K562 (cell line): ENCODE measurements at regions of chr12 and their contacts with region 1.

Region 1: DNA sequence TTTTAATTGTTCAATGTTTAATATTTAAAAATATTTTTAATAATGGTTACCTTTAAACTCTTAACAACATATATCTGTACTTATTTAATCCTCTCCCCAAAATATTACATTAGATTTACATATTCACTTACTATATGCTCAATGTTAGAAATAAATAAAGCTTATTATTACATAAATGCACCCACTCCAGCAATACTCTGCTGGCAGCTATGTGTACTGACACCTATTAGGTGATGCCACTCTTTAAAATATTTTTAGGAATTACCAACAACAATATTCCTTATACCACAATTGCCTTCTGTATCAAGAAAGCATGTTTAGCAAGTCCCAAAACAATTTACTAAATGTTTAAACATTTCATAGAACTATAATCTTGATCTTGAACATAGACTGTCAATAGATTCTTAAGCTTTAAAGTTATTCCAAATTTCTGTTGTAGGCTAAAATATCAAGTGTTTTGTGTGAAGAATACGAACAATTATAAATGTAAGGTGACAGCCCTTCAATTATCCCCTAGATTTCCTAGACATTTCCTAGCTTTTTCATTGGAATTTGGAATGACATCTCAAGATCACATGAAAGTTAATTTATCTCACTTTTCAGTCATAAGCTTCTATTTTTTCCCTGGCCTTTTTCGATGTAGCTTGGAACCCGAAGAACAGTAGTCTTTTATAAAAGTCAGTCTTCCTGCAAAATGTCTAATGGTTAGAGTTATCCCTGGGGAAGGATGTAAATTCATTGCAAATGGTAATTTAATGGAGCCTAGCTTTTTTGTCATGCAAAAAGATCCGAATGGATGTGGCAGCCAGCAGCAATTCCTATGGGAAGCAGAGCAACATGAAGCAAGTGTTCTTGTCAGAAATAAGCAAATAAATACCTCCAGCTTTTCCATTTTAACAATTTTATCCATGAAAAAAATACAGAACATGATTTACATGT is 907.5 kb upstream of the ATXN7L3B start:
- DNase-seq: no peak
- ATAC-seq: no peak
- H3K4me3 ChIP-seq: no peak overlapping the region
- H3K27ac ChIP-seq: no peak overlapping the region
- H3K4me1 ChIP-seq: no peaks in the 10 kb centered on the region
- H3K27me3 ChIP-seq: no peaks in the 10 kb centered on the region
- CTCF ChIP-seq: no peak
- EP300 ChIP-seq: no peak
- POLR2A ChIP-seq: no peak
- RAD21 ChIP-seq: no peak

Region 2: DNA sequence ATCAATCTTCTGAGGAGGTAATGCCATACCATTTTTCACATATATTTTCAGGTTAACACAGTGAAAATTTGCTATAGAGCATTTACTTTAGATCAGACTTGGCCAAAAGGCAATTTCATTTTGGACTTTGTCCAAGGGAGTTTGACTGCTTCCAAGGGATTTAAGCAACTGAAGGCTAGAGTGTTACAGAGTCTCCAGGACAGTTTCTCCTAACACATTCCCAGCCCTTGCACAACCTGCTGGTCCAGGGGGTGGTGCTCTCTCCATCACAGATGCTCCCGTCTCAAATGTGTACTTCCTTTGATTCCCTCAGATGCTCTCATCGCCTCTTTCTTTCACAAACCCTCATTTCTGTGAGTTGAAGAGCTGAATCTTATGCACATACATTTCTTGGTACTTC is 1548.4 kb before region 1 on chr12:
- CTCF ChIA-PET with region 1: no interaction called
- POLR2A ChIA-PET with region 1: no interaction called
- in situ Hi-C with region 1: no loop called
- intact Hi-C with region 1: no loop called
- DNase-seq: no peak
- ATAC-seq: no peak
- H3K4me3 ChIP-seq: no peak overlapping the region
- H3K27ac ChIP-seq: no peak overlapping the region
- H3K4me1 ChIP-seq: no peaks in the 10 kb centered on the region
- H3K27me3 ChIP-seq: no peaks in the 10 kb centered on the region
- CTCF ChIP-seq: no peak
- EP300 ChIP-seq: no peak
- POLR2A ChIP-seq: no peak
- RAD21 ChIP-seq: no peak

Region 3: GRCh38 chr12:73067616-73068015 is 562.5 kb before region 1 on chr12:
- CTCF ChIA-PET with region 1: no interaction called
- POLR2A ChIA-PET with region 1: no interaction called
- in situ Hi-C with region 1: loop called (anchors 10 kb)
- intact Hi-C with region 1: no loop called
- DNase-seq: no peak
- ATAC-seq: no peak
- H3K4me3 ChIP-seq: no peak overlapping the region
- H3K27ac ChIP-seq: no peak overlapping the region
- H3K4me1 ChIP-seq: no peaks in the 10 kb centered on the region
- H3K27me3 ChIP-seq: no peaks in the 10 kb centered on the region
- CTCF ChIP-seq: no peak
- EP300 ChIP-seq: no peak
- POLR2A ChIP-seq: no peak
- RAD21 ChIP-seq: no peak